ENCODE measurements at regions of chr7 and their contacts with region 1.

Region 1: GRCh38 chr7:157432957-157433576 is 96.3 kb downstream of the DNAJB6 start:
- H3K4me3 Mint-ChIP-seq: peak overlapping the region; percentile 56
- H3K27ac Mint-ChIP-seq: peak overlapping the region; percentile 43
- H3K4me1 Mint-ChIP-seq: peaks cover 17% of the 10 kb centered on the region
- H3K27me3 Mint-ChIP-seq: peaks cover 11% of the 10 kb centered on the region

Region 2: DNA sequence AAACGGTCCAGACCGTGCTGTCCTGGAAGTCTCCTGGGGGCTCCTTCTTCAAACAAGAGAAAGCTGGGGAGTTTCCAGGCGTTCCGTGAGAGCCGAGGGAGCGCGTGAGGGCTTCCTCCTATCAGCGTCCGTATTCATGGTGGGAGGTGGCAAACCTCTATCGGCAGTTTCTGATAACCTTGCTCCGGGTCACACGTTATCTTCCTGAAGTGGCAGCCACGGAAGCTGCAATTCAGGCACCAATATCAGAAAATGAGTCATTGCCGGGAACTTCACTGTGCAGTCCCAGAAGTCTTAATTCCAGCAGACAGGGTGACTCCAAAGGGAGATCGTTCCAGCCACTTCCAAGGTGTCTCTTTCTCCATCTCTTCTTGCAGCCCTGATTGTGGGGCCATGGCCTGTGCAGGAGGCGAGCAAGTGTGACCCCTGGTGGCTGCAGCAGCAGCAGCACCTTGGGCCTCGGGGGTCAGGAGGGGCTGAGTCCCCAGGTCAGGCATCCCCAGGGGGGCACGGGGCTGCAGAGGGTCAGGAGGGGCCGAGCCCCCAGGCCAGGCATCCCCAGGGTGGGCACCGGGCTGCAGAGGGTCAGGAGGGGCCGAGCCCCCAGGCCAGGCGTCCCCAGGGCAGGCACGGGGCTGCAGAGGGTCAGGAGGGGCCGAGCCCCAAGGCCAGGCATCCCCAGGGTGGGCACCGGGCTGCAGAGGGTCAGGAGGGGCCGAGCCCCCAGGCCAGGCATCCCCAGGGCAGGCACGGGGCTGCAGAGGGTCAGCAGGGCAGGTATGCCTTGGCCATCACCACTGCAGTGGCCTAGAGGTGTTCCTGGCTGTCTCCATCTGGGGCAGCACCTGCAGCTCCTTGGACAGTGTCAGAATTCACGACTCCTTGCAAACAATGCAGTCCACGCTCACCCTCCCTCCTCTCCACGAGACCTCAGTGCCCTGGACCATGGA is 442.4 kb after region 1 on chr7:
- intact Hi-C with region 1: loop called (anchors 1 kb)
- H3K4me3 Mint-ChIP-seq: no peak overlapping the region
- H3K27ac Mint-ChIP-seq: no peak overlapping the region
- H3K4me1 Mint-ChIP-seq: peaks cover 26% of the 10 kb centered on the region
- H3K27me3 Mint-ChIP-seq: peaks cover 40% of the 10 kb centered on the region